A673 (cell line): ENCODE measurements at regions of chr6 and their contacts with region 1.

Region 1: DNA sequence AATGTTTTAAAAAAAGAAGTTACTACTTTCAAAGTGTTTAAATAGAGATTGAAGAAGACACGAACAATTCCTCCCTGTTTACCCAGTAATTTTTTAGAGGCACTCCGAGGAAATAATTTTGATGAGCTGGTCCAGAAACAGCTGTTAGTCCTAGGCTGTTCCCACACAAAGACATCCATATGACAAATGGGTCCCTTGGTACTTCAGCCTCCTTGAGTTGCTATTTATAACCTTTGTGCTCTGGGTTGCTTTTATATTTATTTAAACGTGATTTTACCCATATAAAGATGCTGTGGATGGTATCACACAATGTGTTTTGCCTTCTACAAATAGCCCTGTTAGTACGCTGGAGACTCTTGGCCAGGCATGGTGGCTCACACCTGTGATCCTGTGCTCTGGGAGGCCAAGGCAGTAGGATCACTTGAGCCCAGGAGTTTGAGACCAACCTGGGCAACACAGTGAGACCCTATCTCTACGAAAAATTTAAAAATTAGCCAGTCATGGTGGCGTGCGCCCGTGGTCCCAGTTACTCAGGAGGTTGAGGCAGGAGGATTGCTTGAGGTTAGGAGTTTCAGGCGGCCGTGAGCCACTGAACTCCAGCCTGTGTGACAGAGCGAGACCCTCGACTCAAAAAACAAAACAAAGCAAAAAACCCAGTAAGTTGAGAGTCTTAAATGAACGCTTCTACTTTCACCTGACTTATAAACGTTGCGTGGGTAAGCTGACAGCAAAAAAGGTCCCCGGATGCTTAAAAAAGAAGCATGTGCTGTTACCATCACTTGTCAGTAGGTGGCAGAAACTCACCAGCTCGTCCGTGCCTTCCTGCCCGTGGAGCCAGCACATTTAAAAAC is 56.9 kb upstream of the ARMH2 start:
- DNase-seq: peak; percentile 79
- H3K4me3 ChIP-seq: no peak overlapping the region
- H3K27ac ChIP-seq: no peak overlapping the region
- H3K4me1 ChIP-seq: peaks cover 5% of the 10 kb centered on the region
- H3K27me3 ChIP-seq: no peaks in the 10 kb centered on the region
- CTCF ChIP-seq: peak; percentile 89

Region 2: DNA sequence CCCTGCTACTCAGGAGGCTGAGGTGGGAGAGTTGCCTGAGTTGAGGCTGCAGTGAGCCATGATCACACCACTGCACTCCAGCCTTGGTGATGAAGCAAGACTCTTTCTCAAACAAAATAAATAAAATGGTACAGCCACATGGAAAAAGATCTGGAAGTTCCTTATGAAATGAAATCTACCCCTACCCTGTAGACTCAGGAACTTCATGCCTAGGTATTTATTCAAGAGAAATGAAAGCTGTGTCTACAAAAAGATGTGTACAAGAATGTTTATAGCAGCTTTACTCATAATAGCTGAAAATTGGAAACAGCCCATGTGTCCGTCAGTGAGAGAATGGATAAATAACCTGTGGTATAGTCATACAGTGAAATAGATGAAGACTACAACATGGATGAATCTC is 121.5 kb before region 1 on chr6:
- CTCF ChIA-PET with region 1: no interaction called
- POLR2A ChIA-PET with region 1: no interaction called
- intact Hi-C with region 1: no loop called
- DNase-seq: no peak
- H3K4me3 ChIP-seq: no peak overlapping the region
- H3K27ac ChIP-seq: no peak overlapping the region
- H3K4me1 ChIP-seq: no peaks in the 10 kb centered on the region
- H3K27me3 ChIP-seq: no peaks in the 10 kb centered on the region
- CTCF ChIP-seq: no peak

Region 3: GRCh38 chr6:25017932-25018567 is 162.4 kb after region 1 on chr6:
- CTCF ChIA-PET with region 1: interaction called, 7 read pairs
- POLR2A ChIA-PET with region 1: interaction called, 3 read pairs
- intact Hi-C with region 1: loop called (anchors 5 kb)
- DNase-seq: peak; percentile 46
- H3K4me3 ChIP-seq: no peak overlapping the region
- H3K27ac ChIP-seq: no peak overlapping the region
- H3K4me1 ChIP-seq: no peaks in the 10 kb centered on the region
- H3K27me3 ChIP-seq: no peaks in the 10 kb centered on the region
- CTCF ChIP-seq: peak; percentile 62

Region 4: DNA sequence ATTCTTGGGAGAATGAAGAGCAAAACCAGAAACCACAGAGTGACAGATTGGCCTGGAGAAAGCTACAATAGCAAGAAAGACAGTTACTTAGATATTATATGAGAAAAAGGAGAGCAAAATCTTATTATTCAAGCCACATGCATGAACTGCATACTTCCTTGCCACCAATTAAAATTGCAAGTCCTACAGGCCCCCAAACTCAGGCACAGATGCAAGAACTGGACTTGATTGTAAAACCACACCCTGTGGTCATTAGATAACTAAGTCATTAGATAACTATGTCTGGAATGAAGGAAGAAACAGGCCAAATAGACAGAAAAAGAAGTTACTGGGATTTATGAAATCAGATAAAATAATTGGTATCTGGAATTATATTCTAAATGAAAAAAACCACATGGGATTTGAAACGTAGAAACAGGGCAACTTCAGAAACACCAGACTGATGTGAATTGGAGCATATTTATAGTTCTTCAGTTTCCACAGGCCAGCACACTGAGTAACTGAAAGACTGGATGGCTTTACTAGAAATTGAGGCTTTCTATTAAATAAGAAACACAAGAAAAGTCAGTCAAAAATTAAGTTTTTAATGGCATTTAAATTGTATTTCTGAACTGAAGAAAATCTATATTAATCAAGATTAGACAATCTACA is 374.2 kb after region 1 on chr6:
- CTCF ChIA-PET with region 1: no interaction called
- POLR2A ChIA-PET with region 1: no interaction called
- intact Hi-C with region 1: no loop called
- DNase-seq: no peak
- H3K4me3 ChIP-seq: no peak overlapping the region
- H3K27ac ChIP-seq: no peak overlapping the region
- H3K4me1 ChIP-seq: no peaks in the 10 kb centered on the region
- H3K27me3 ChIP-seq: no peaks in the 10 kb centered on the region
- CTCF ChIP-seq: no peak